Prostate gland (tissue), 2 donors: ENCODE measurements at regions of chr15 and their contacts with region 1.

Region 1: GRCh38 chr15:90931737-90932659 is at the start of gene HDDC3:
- DNase-seq: peak; percentile 89
- H3K4me3 ChIP-seq: peak within 1 kb of the TSS; percentile 56 to 80
- H3K27ac ChIP-seq: peak within 1 kb of the TSS; percentile 94
- H3K4me1 ChIP-seq: peaks cover 9% of the 10 kb centered on the region
- H3K27me3 ChIP-seq: no peaks in the 10 kb centered on the region
- CTCF ChIP-seq: peak; percentile 81 to 95 (median 91)
- POLR2A ChIP-seq: peak; percentile 71
- total RNA-seq, gene HDDC3: 16.2 to 30.6 TPM

Region 2: DNA sequence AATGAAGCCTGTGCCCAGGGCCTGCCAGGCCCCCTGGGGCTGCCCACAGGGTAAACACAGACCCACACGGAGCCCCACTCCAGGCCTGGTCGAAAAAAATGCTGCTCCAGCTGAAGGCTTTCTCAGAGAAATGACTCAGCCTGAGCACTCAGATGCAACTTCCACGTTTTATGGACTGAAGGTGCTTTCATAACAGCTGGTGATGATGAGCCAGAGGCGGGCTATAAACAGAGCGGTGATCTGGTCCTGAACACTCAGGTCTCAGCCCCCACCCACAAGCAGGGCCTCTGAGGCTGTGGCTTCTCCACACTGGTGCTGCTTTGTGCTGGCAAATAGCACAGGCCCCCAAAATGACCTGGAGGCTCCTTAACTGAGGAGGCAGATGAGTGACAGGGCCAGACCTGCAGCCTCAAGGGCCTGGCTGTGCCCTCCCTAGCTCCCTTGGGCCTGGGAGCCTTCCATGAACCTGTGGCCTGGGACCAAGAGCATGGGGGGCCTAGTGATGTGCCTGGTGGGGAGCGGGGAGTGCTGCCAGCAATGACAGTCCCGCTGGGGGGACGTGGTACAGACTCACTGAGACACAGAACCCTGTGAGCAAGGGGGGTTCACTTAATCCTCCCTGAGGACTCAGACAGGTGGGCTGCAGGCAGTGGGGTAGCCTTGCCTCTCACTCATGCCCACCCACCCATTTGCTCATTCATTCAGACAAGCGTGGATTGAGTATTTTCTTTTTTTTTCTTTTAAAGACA is 86.6 kb before region 1 on chr15:
- intact Hi-C with region 1: no loop called
- DNase-seq: no peak
- H3K4me3 ChIP-seq: no peak overlapping the region
- H3K27ac ChIP-seq: no peak overlapping the region
- H3K4me1 ChIP-seq: no peaks in the 10 kb centered on the region
- H3K27me3 ChIP-seq: no peaks in the 10 kb centered on the region
- CTCF ChIP-seq: no peak
- POLR2A ChIP-seq: no peak

Region 3: GRCh38 chr15:90902040-90902839 is 29.8 kb before region 1 on chr15:
- intact Hi-C with region 1: loop called (anchors 2 kb)
- DNase-seq: peak; percentile 79
- H3K4me3 ChIP-seq: peak overlapping the region; percentile 66 to 71
- H3K27ac ChIP-seq: peak overlapping the region; percentile 87 to 93
- H3K4me1 ChIP-seq: peaks cover 9% of the 10 kb centered on the region
- H3K27me3 ChIP-seq: no peaks in the 10 kb centered on the region
- CTCF ChIP-seq: peak; percentile 57 to 88 (median 76)
- POLR2A ChIP-seq: peak; percentile 49

Region 4: DNA sequence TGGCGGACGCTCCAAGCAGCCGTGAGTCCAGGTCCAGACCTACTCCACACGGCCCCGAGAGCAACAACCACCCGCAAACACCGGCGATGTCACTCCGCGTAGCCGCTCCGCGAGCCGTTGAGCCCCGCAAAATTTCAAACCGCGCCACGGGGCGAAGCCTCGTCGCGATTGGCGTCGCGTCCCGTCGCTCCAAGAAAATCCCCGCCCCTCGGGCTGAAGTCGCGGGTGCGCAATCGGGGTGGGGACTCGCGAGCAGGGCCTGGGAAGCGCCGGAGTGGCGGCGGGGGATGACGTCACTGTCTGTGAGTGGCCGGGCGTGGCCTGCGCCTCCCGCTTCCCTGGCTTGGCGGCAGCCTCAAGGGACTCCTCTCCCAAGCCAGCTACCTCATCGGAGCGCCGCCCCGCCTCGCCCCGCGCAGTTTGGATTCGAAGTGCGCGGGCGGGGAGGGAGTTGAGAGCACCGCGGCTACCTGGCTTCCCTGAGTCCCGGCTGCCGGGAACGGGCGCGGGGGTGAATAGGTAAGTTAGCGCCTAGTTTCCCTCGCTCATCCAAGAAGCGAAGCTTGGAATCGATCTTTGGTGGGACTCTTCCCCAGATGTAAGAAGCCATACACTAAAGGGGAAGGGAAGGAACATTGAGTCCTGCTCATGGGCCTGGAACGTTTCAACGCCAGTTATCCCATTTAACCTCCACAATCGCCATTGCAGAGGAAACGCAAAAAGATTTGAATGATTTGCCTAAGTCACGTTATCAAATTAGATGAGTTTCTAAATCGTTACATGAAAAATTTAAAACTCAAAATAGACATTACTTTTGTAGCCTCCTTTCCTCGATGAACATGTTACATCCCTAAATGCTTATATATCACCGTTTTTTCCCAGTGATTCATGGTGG is 62.7 kb after region 1 on chr15 and contains the start of gene PRC1:
- intact Hi-C with region 1: no loop called
- DNase-seq: peak; percentile 99
- H3K4me3 ChIP-seq: peak within 1 kb of the TSS; percentile 87 to 91
- H3K27ac ChIP-seq: peak within 1 kb of the TSS; percentile 87 to 93
- H3K4me1 ChIP-seq: no peaks in the 10 kb centered on the region
- H3K27me3 ChIP-seq: no peaks in the 10 kb centered on the region
- CTCF ChIP-seq: no peak
- POLR2A ChIP-seq: no peak
- total RNA-seq, gene PRC1: 13.5 to 37.0 TPM